ENCODE measurements at regions of chr14 and their contacts with region 1.

Region 1: DNA sequence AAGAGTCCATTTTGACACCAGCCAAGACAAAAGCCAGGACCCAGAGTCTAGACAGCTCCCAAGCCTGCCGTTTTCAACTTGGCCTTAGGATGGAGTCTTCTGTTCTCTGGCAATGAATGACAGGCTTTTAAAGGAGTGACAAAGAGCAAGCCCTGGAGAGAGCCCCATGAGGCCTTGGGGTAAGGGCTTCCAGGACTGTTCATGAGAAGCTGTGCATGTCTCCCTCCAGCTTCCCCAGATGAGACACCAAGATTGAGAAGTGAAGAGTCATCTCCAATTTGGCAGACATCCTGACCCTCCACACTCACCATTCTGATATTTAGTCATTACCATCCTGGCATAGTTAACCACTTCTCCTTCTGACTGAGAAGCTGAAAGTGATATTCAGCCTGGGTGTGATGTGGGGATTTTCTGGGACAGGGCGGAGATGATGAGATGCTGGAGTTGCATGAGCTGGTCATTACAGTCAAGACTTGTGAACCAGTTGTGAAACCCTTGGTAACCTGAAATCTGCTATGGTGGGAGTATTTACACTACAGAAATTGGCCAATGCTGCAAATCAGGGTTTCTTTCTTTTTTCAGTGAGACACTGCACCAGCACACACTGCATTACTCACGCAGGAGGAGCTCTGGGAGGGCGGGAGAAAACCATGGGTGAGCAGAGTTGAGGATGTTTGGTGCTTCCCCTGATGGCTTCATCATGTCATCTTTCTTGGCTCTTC is 77.8 kb downstream of the VCPKMT start:
- DNase-seq: peak; percentile 98
- ATAC-seq: peak; percentile 71
- H3K4me3 ChIP-seq: no peak overlapping the region
- H3K27ac ChIP-seq: peak overlapping the region; percentile 90
- H3K4me1 ChIP-seq: peaks cover 44% of the 10 kb centered on the region
- H3K27me3 ChIP-seq: no peaks in the 10 kb centered on the region
- CTCF ChIP-seq: 0 out of 2 replicates have a peak, but pooled peaks have one; percentile 30

Region 2: DNA sequence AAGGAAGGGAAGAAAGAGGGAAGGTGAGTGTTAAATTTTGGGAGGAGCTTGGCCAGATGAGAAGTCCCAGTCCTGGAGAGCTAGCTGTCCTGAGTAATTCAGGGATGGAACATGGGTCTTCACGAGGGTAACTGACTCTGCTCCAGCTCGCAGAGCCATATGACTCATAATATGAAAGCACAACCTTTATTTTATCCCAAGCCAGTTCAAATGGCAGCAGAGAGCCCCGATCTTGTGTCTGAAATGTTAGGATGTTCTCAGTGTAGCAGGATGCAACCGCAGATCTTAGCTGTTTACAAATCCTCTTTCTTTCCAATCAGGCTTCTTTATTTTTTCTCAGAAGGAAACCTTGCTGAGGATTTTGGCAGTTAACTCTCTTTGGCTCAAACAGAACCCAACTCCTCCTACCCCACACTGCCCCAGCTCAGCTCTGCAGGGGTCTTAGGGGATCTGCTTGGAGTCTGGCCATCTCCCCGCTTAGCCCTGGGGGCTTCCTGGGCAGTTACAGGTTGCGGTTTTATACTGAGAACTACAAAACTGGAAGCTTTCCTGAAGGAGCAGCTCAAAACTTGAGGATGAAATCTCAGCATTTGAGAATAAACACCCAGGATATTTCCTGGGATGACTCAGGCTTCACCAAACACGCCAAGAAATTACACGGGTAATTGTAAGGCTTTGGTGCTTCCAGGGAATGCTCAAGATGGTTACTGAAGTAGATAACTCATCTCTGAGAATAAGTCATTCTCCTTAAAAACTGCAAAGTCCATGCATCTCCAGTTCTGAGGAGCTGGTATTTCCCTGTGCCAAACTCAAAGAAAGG is 14.7 kb before region 1 on chr14:
- CTCF ChIA-PET with region 1: interaction called, 6 read pairs
- POLR2A ChIA-PET with region 1: interaction called, 10 read pairs
- intact Hi-C with region 1: loop called (anchors 1 kb)
- DNase-seq: peak; percentile 85
- ATAC-seq: peak; percentile 84
- H3K4me3 ChIP-seq: peak overlapping the region; percentile 53
- H3K27ac ChIP-seq: peak overlapping the region; percentile 96
- H3K4me1 ChIP-seq: peaks cover 28% of the 10 kb centered on the region
- H3K27me3 ChIP-seq: no peaks in the 10 kb centered on the region
- CTCF ChIP-seq: no peak

Region 3: DNA sequence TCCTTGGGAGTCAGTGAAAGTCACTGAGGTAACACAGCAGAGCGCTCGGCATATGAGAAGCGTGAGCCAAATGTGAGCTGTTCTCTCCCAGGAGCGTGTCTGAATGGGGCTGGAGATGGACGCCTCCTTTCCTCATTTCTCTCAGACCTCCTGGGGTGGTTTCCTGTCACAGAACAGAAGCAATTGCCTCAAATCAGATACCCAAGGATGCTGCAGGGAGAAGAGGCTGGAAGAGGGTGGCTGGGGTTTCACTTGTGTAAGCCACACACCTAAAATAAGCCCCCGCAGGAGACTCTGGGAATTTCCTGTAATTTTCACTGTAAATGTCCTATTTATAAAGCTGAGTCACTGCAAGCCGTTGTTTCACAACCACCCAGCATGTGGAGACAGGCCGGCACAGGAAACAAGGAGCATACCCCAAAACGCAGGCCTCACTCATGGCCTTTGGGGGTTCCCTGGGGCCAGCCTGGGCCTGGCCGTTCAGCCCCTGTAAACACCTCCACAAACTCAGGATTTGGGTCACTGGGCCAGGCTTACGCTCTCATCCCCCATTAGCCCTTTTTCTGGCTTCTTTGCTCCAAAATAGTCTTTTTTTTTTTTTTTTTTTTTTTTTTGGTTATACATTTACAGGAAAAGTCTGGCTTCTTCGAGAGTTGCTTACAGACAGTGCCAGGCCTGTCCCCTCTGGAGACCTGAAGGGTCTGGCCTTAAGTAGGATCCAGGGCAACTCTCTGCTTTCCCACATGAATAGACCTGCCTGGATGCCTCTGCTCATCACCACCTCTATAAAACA is 22.5 kb after region 1 on chr14:
- CTCF ChIA-PET with region 1: interaction called, 4 read pairs
- POLR2A ChIA-PET with region 1: no interaction called
- intact Hi-C with region 1: loop called (anchors 1 kb)
- DNase-seq: peak; percentile 88
- ATAC-seq: peak; percentile 66
- H3K4me3 ChIP-seq: no peak overlapping the region
- H3K27ac ChIP-seq: peak overlapping the region; percentile 96
- H3K4me1 ChIP-seq: peaks cover 38% of the 10 kb centered on the region
- H3K27me3 ChIP-seq: no peaks in the 10 kb centered on the region
- CTCF ChIP-seq: peak; percentile 33; the same call in 1 of the 2 replicates

Region 4: GRCh38 chr14:50631408-50631821 is 592.9 kb after region 1 on chr14:
- CTCF ChIA-PET with region 1: no interaction called
- POLR2A ChIA-PET with region 1: no interaction called
- intact Hi-C with region 1: no loop called
- DNase-seq: no peak
- ATAC-seq: peak; percentile 64
- H3K4me3 ChIP-seq: no peak overlapping the region
- H3K27ac ChIP-seq: no peak overlapping the region
- H3K4me1 ChIP-seq: no peaks in the 10 kb centered on the region
- H3K27me3 ChIP-seq: no peaks in the 10 kb centered on the region
- CTCF ChIP-seq: no peak